ENCODE measurements at regions of chr19 and their contacts with region 1.

Region 1: GRCh38 chr19:8641908-8642547 is 11.6 kb downstream of the NFILZ start:
- DNase-seq: no peak
- H3K4me3 ChIP-seq: no peak overlapping the region
- H3K27ac ChIP-seq: no peak overlapping the region
- H3K4me1 ChIP-seq: peaks cover 0 to 10% of the 10 kb centered on the region in 2 donors
- H3K27me3 ChIP-seq: no peaks in the 10 kb centered on the region
- CTCF ChIP-seq: peak; percentile 61 to 73 (median 61)

Region 2: DNA sequence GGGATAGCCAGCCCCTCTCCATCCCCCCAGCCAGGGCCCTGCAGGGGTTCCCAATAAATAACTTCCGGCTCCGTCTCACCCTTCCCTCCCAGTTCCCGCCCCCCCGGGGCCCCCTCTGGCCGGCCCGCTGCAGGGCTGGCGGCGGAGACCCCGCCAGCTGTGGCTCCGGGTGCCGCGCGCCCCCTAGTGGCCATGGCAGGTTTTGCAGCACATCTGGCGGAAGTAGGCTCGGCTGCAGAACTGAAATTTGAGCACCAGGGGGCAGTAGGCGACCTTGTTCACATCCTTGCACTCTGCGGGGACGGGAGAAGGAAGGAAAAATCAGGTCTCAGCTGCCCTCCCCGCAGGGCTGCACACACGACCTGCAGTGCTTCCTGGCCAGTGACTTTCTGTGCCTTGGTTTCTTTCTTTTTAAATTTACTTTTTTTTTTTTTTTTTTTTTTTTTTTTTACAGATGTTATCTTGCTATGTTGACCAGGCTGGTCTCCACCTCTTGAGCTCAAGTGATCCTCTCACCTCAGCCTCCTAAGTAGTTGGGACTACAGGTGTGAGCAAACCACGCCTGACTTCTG is 61.2 kb before region 1 on chr19:
- intact Hi-C with region 1: loop called (anchors 2 kb)
- DNase-seq: peak; percentile 44 to 92
- H3K4me3 ChIP-seq: no peak overlapping the region
- H3K27ac ChIP-seq: no peak overlapping the region
- H3K4me1 ChIP-seq: no peaks in the 10 kb centered on the region
- H3K27me3 ChIP-seq: no peaks in the 10 kb centered on the region
- CTCF ChIP-seq: peak; percentile 99 to 100 (median 100)

Region 3: GRCh38 chr19:8615813-8616596 is 26.0 kb before region 1 on chr19:
- intact Hi-C with region 1: loop called (anchors 1 kb)
- DNase-seq: peak in 1 of 2 donors; percentile 84
- H3K4me3 ChIP-seq: no peak overlapping the region
- H3K27ac ChIP-seq: peak overlapping the region; percentile 46 to 81
- H3K4me1 ChIP-seq: peaks cover 4 to 5% of the 10 kb centered on the region in 2 donors
- H3K27me3 ChIP-seq: no peaks in the 10 kb centered on the region
- CTCF ChIP-seq: peak; percentile 85 to 97 (median 95)